Naive thymus-derived CD4-positive, alpha-beta T cell (primary cell): ENCODE measurements at regions of chr6 and their contacts with region 1.

Region 1: DNA sequence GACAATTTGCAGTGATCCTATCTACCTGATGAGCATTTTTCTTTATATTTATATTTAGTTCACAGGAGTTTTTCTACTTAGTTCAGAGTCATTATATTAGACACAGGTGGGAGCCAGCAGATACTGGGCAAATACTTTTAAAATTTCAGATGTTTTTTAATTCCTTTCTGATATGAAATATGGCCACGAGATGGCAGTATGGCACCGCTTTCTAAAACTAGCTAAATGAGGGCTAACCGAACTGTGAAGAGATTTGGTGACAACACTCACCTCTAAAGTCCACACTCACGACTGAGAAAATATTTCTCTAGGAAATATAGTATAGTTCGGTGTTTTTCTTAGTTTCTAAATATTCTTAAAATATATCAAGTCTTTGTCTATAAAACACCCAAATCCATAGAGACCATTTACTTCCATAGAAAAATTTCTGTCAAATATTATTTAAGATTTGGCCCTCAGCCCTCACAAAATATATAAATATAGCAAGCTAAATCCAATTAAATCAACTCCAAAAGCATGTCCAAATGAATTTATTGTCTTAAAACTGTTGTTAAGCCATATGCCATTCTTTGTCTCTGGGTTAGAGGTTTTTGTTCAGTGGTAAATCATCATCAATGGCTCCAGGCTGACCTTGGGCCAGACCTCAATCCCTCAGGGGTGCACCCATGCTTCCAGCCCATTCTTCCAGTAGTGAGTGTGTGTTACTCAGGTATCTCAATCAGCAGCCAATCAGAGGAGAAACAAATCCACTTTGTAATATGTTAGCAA is 63.6 kb downstream of the HUS1B start:
- DNase-seq: peak; percentile 20 to 69 (median 62)
- ATAC-seq: peak; percentile 78
- H3K4me3 ChIP-seq: no peak overlapping the region
- H3K4me3 Mint-ChIP-seq: no peak overlapping the region
- H3K27ac ChIP-seq: no peak overlapping the region
- H3K27ac Mint-ChIP-seq: peak overlapping the region in 1 of 9 donors; percentile 44
- H3K4me1 ChIP-seq: no peaks in the 10 kb centered on the region
- H3K4me1 Mint-ChIP-seq: peaks cover 0 to 19% (median 0%) of the 10 kb centered on the region in 7 donors
- H3K27me3 ChIP-seq: no peaks in the 10 kb centered on the region
- H3K27me3 Mint-ChIP-seq: no peaks in the 10 kb centered on the region

Region 2: GRCh38 chr6:692855-693722 is 99.8 kb after region 1 on chr6 and contains the start of gene EXOC2:
- CTCF ChIA-PET with region 1: no interaction called
- POLR2A ChIA-PET with region 1: no interaction called
- intact Hi-C with region 1: loop called (anchors 2 to 10 kb)
- DNase-seq: peak; percentile 70 to 88 (median 81)
- ATAC-seq: peak; percentile 93
- H3K4me3 ChIP-seq: peak within 1 kb of the TSS; percentile 87
- H3K4me3 Mint-ChIP-seq: peak within 1 kb of the TSS; percentile 92 to 96 (median 95)
- H3K27ac ChIP-seq: peak within 1 kb of the TSS; percentile 83
- H3K27ac Mint-ChIP-seq: peak within 1 kb of the TSS; percentile 84 to 92 (median 91)
- H3K4me1 ChIP-seq: peaks cover 14 to 20% of the 10 kb centered on the region in 2 donors
- H3K4me1 Mint-ChIP-seq: peaks cover 23 to 45% (median 29%) of the 10 kb centered on the region in 7 donors
- H3K27me3 ChIP-seq: no peaks in the 10 kb centered on the region
- H3K27me3 Mint-ChIP-seq: no peaks in the 10 kb centered on the region
- total RNA-seq, gene EXOC2: 26.7 to 40.6 (median 38.8) TPM

Region 3: GRCh38 chr6:786946-787763 is 193.8 kb after region 1 on chr6:
- CTCF ChIA-PET with region 1: no interaction called
- POLR2A ChIA-PET with region 1: no interaction called
- intact Hi-C with region 1: loop called in 1 of 2 experiments (anchors 1 kb)
- DNase-seq: no peak
- ATAC-seq: no peak
- H3K4me3 ChIP-seq: no peak overlapping the region
- H3K4me3 Mint-ChIP-seq: no peak overlapping the region
- H3K27ac ChIP-seq: no peak overlapping the region
- H3K27ac Mint-ChIP-seq: no peak overlapping the region
- H3K4me1 ChIP-seq: peaks cover 0 to 5% of the 10 kb centered on the region in 2 donors
- H3K4me1 Mint-ChIP-seq: peaks cover 1 to 20% (median 17%) of the 10 kb centered on the region in 7 donors
- H3K27me3 ChIP-seq: no peaks in the 10 kb centered on the region
- H3K27me3 Mint-ChIP-seq: peaks cover 3 to 15% (median 8%) of the 10 kb centered on the region in 5 donors

Region 4: GRCh38 chr6:1381481-1382330 is 788.4 kb after region 1 on chr6:
- CTCF ChIA-PET with region 1: interaction called, 4 read pairs
- POLR2A ChIA-PET with region 1: no interaction called
- intact Hi-C with region 1: loop called (anchors 1 to 5 kb)
- DNase-seq: peak in 8 of 9 donors; percentile 7 to 77 (median 49)
- ATAC-seq: peak; percentile 78
- H3K4me3 ChIP-seq: no peak overlapping the region
- H3K4me3 Mint-ChIP-seq: peak overlapping the region; percentile 31 to 75 (median 52)
- H3K27ac ChIP-seq: no peak overlapping the region
- H3K27ac Mint-ChIP-seq: no peak overlapping the region
- H3K4me1 ChIP-seq: peaks cover 0 to 16% of the 10 kb centered on the region in 2 donors
- H3K4me1 Mint-ChIP-seq: peaks cover 21 to 50% (median 37%) of the 10 kb centered on the region in 7 donors
- H3K27me3 ChIP-seq: peaks cover 8 to 20% of the 10 kb centered on the region in 2 donors
- H3K27me3 Mint-ChIP-seq: peaks cover 54 to 81% (median 57%) of the 10 kb centered on the region in 5 donors

Region 5: DNA sequence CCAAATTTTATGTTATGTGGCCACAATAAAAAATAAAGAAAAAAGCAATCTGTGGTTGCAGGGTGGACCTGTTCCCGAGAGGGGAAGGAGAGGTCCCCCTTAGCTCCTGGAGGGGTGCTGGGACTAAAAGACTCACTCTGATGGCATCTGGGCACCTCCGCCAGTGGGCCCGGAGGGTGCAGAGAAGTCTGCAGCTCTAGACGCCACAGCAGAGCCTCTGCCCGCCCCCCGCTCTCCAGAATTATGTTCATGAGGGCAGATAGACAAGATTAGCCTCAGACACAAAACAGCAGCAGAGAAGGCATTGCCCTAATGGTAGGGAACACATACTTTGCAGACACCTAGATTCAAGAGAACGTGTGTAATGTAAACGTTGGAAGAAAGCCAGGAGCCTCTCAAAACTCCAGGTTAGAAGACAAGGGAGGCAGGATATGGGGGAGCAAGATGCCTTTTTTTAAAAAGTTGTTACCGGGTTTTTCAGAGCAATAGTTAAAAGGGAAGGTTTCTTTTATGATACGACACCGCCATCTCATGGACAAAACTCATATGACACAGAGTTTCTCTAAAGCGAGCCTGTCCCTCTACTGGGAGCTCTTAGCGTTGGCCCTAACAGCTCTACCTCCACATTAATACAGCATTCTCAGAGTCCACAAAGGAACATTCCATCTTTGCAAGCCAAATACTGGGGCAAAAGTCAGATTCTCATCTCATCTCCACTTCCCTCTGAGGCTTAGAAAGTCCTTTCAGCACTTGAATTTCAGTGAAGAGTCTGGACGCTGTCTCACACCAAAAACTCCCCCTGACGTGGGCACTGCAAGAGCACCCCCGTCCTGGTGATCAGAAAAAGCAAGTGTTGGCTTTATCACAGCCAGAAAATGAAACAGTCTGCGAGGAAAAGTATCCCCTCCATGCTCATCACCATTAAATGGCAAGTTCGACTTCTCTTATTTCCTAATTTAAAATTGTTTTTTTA is 843.3 kb after region 1 on chr6:
- CTCF ChIA-PET with region 1: no interaction called
- POLR2A ChIA-PET with region 1: no interaction called
- intact Hi-C with region 1: loop called (anchors 1 to 2 kb)
- DNase-seq: peak in 8 of 9 donors; percentile 24 to 66 (median 56)
- ATAC-seq: peak; percentile 83
- H3K4me3 ChIP-seq: no peak overlapping the region
- H3K4me3 Mint-ChIP-seq: no peak overlapping the region
- H3K27ac ChIP-seq: no peak overlapping the region
- H3K27ac Mint-ChIP-seq: no peak overlapping the region
- H3K4me1 ChIP-seq: no peaks in the 10 kb centered on the region
- H3K4me1 Mint-ChIP-seq: peaks cover 0 to 5% (median 0%) of the 10 kb centered on the region in 7 donors
- H3K27me3 ChIP-seq: no peaks in the 10 kb centered on the region
- H3K27me3 Mint-ChIP-seq: peaks cover 34 to 59% (median 47%) of the 10 kb centered on the region in 5 donors